Motor neuron (in vitro differentiated cells): ENCODE measurements at regions of chr16 and their contacts with region 1.

Region 1: DNA sequence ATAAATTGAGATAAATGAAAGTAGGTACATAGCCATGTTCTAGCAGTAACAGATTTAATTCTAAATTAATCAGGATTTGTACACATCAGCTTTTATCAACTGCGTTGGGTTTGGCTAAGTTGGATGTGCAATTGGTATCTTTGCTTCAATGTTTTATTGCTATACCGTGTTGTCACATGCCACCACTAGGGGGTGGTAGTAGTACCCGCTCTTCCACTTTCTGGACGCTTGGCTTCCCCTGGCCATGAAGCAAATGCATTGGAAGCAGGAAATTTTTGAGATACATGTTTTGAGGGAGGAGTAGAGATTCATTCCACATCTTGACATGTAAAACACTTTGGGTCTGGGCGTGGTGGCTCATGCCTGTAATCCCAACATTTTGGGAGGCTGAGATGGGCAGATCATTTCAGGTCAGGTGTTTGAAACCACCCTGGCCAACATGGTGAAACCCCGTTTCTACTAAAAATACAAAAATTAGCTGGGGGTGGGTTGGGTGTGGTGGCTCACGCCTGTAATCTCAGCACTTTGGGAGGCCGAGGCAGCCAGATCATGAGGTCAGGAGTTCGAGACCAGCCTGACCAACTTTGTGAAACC is 58.6 kb downstream of the EMP2 start:
- ATAC-seq: peak in 4 of 8 experiments; percentile 57 to 95 (median 94)
- H3K4me3 ChIP-seq: no peak overlapping the region
- H3K27ac ChIP-seq: no peak overlapping the region
- H3K4me1 ChIP-seq: no peaks in the 10 kb centered on the region

Region 2: DNA sequence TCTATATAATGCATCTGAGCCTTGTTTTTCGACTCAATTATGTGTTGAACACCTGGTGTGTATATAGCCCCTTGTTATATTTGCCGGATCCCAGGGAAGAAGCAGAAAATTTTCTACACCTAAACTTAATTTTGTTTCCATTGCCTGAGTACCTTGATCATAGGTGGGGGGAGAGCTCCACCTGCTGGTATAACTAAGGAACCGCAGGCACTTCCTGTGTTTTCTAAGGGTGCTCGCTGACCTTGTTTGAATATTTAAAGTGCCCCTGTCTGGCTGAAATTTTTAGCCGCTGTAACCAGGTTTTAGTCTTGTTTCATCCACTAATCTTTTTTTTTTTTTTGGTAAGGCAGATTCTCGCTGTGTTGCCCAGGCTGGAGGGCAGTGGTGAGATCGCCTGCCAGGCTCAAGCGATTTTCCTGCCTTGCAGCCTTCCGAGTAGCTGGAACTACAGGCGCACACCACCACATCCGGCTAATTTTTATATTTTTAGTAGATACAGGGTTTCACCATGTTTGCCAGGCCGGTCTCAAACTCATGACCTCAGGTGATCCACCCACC is 215.4 kb after region 1 on chr16:
- in situ Hi-C with region 1: loop called in 8 of 9 experiments (anchors 5 to 10 kb)
- ATAC-seq: peak; percentile 26 to 84 (median 72)
- H3K4me3 ChIP-seq: no peak overlapping the region
- H3K27ac ChIP-seq: no peak overlapping the region
- H3K4me1 ChIP-seq: peaks cover 0 to 2% of the 10 kb centered on the region in 2 donors